Adrenal gland (tissue), 19 donors: ENCODE measurements at regions of chr7 and their contacts with region 1.

Region 1: DNA sequence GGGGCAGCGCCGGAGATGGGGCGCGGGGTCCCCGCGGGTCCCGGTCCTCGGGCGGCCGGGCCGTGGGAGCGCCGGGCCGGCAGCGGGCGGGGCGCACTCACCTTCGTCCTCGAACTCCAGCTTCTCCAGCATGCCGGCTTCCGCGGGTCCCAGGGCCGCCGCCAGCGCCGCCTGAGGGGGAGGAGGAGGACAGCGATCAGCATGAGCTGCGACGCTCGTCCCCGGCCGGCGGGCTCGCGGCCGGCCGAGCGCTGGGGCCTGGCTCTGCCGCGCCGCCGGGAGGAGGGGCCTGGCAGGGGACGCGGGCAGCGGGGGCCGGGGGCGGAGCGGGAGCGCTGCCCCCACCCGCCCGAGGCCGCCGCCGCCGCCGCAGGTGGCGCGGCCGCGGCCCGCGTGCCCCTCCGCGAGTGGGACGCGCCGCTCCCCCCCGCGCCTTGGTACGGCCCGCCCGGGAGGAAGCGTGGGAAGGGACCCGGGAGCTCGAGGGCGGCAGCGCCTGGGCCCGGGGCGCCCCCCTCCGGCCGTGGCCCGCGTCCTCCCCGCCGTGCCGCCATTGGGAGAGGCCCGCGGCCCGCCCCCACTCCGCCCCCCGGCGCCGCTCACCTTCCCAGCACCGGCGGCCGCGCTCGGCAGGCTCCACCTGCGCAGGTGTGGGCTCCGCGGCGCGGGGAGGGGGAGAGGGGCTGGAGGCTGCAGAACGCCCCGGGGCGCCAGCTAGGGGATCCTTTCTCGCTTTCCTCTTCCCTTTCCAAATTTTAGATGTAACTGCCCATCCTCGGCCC is 112.5 kb upstream of the RHEB start:
- DNase-seq: peak; percentile 76 to 89 (median 82)
- H3K4me3 ChIP-seq: peak overlapping the region in 3 of 4 donors; percentile 22 to 84 (median 44)
- H3K27ac ChIP-seq: peak overlapping the region; percentile 17 to 96 (median 87)
- H3K4me1 ChIP-seq: peaks cover 0 to 9% of the 10 kb centered on the region in 2 donors
- H3K27me3 ChIP-seq: no peaks in the 10 kb centered on the region
- CTCF ChIP-seq: peak in 2 of 6 experiments; percentile 22 to 48
- POLR2A ChIP-seq: peak; percentile 22 to 62

Region 2: GRCh38 chr7:151744656-151745638 is 112.8 kb after region 1 on chr7:
- intact Hi-C with region 1: loop called (anchors 10 kb)
- DNase-seq: peak in 4 of 7 donors; percentile 25 to 62 (median 38)
- H3K4me3 ChIP-seq: no peak overlapping the region
- H3K27ac ChIP-seq: no peak overlapping the region
- H3K4me1 ChIP-seq: peaks cover 0 to 6% of the 10 kb centered on the region in 2 donors
- H3K27me3 ChIP-seq: no peaks in the 10 kb centered on the region
- CTCF ChIP-seq: peak in 3 of 6 experiments; percentile 11 to 23 (median 16)
- POLR2A ChIP-seq: no peak